HEK293 (cell line): ENCODE measurements at regions of chr1 and their contacts with region 1.

Region 1: GRCh38 chr1:50873458-50874187 is 86.4 kb downstream of the FAF1 start:
- H3K4me3 ChIP-seq: peak overlapping the region; percentile 42
- H3K27ac ChIP-seq: no peak overlapping the region
- H3K4me1 ChIP-seq: no peaks in the 10 kb centered on the region
- CTCF ChIP-seq: no peak

Region 2: DNA sequence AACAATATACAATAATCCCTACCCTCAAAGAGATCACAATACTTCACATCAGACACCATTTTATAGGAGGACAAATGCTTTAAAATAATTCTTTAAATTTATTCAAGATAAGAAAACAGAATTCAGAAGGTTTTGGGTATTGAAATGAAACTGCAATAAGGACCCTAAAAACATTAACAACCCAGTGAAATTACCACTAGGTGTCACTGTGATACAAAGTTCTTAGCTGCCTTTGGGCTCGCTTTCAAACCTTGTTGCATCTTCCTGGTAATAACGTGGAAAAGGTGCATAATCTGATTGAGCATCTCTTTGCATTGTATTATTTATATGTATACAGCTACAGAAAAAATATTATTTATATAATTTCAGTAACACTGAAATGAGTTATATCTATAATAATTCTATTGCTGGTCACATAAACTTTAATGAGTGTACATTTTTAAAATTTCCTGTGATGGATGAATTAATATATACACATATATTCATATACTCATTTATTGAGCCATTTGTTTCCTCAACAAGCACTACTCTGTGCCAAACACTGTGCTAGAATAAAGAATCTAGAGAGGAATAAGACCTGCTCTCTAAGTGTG is 98.8 kb before region 1 on chr1:
- CTCF ChIA-PET with region 1: interaction called, 13 read pairs
- POLR2A ChIA-PET with region 1: no interaction called
- H3K4me3 ChIP-seq: no peak overlapping the region
- H3K27ac ChIP-seq: no peak overlapping the region
- H3K4me1 ChIP-seq: no peaks in the 10 kb centered on the region
- CTCF ChIP-seq: 0 out of 2 replicates have a peak, but pooled peaks have one; percentile 22

Region 3: GRCh38 chr1:50852889-50853288 is 20.7 kb before region 1 on chr1:
- CTCF ChIA-PET with region 1: interaction called, 24 read pairs
- POLR2A ChIA-PET with region 1: no interaction called
- H3K4me3 ChIP-seq: no peak overlapping the region
- H3K27ac ChIP-seq: no peak overlapping the region
- H3K4me1 ChIP-seq: no peaks in the 10 kb centered on the region
- CTCF ChIP-seq: no peak

Region 4: DNA sequence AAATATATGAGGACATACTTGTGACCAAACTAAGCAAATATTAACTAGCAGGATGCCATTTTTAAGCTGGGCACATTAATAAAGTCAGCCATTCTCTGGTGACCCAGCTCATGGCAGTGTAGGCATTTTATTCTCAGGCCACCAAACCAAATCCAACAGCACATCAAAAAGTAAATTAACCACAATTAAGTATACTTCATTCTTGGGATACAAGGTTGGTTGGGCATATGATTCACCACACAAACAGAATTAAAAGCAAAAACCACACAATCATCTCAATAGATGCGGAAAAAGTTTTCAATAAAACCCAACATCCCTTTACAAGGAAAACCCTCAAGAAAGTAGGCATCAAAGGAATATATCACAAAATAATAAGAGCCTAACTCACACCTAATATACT is 14.9 kb before region 1 on chr1:
- CTCF ChIA-PET with region 1: interaction called, 24 read pairs
- POLR2A ChIA-PET with region 1: no interaction called
- H3K4me3 ChIP-seq: no peak overlapping the region
- H3K27ac ChIP-seq: no peak overlapping the region
- H3K4me1 ChIP-seq: no peaks in the 10 kb centered on the region
- CTCF ChIP-seq: no peak

Region 5: DNA sequence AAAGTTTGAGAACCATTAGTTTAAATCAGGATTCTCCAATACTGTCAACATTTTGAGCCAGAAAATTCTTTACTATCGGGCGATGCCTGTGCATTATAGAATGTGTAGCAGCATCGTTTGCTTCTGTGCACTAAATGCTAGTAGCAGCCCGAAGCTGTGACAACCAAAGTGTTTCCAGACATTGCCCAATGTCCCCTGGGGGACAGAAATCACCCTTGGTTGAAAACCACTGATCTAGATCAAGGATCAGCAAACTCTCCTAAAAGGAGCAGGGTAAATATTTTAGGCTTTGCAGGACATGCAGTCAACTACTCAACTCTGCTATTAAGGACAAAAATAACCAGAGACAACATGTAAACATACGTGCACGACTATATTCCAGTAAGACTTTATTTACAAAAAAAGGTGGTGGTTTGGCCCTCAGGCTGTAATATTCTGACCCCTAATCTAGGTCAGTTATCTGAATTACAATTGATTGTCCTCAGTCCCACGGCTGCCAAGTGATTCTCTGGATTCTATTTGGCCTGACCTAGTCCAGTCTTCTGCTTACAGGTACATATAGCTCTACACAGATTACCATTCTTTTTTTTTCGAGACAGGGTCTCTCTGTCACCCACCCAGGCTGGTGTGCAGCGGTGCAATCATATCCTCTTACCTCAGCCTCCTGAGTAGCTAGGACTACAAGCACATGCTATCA is 75.8 kb after region 1 on chr1:
- CTCF ChIA-PET with region 1: no interaction called
- POLR2A ChIA-PET with region 1: no interaction called
- H3K4me3 ChIP-seq: no peak overlapping the region
- H3K27ac ChIP-seq: no peak overlapping the region
- H3K4me1 ChIP-seq: no peaks in the 10 kb centered on the region
- CTCF ChIP-seq: no peak

Region 6: DNA sequence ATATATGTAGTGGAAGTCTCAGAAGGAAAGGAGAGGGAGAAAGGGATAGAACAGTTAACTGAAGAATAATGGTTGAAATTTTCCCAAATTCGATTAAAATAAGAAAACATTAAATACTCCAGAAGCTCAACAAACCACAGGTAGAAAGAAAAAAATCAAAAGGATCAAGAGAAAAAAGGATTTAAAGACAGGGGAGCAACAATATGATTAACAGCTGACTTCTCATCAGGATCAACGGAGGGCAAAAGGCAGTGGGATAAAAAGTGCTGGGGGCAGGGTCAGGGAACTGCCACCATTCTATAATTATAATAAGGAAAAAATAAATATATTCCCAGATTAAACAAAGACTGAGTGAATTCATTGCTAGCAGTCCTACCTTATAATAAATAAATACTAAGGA is 151.8 kb after region 1 on chr1:
- CTCF ChIA-PET with region 1: no interaction called
- POLR2A ChIA-PET with region 1: no interaction called
- H3K4me3 ChIP-seq: no peak overlapping the region
- H3K27ac ChIP-seq: no peak overlapping the region
- H3K4me1 ChIP-seq: no peaks in the 10 kb centered on the region
- CTCF ChIP-seq: no peak

Region 7: GRCh38 chr1:51044834-51045233 is 171.2 kb after region 1 on chr1:
- CTCF ChIA-PET with region 1: no interaction called
- POLR2A ChIA-PET with region 1: no interaction called
- H3K4me3 ChIP-seq: no peak overlapping the region
- H3K27ac ChIP-seq: no peak overlapping the region
- H3K4me1 ChIP-seq: no peaks in the 10 kb centered on the region
- CTCF ChIP-seq: no peak

Region 8: DNA sequence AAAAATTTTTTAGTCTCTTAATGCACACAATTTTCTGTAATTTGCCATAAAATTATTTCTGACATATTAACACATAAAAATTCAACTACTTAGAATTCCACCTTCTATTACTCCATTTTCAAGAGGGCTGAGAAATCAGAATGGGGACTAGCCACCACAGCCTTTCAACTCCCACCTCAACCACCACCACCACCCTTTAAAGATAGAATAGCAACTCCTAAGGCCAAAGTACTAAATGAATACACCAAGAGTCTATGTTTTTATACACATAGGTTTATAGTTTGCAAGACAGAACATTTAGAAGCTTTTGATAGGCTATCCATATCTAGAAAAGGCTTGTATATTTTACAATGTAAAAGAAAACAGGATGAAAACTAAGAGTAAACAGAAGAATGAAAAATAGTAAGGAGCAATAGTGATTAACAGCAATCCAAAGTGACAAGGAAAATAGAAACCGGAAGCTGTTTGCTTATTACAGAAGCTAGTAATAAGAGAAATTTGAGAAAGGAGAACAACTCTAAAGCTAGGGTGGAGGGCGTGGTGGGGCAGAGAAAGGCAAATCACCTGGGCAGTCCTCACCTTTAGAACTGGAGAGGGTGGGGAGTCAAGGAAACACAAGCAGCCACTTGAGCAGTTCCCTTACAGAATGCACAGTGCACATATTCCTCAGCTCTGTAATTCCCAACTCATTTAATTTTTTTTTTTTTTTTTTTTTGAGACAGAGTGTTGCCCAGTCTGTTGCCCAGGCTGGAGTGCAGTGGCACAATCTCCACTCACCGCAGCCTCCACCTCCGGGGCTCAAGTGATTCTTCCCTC is 617.8 kb after region 1 on chr1:
- CTCF ChIA-PET with region 1: no interaction called
- POLR2A ChIA-PET with region 1: no interaction called
- H3K4me3 ChIP-seq: no peak overlapping the region
- H3K27ac ChIP-seq: no peak overlapping the region
- H3K4me1 ChIP-seq: peaks cover 13% of the 10 kb centered on the region
- CTCF ChIP-seq: no peak